ENCODE measurements at regions of chr12 and their contacts with region 1.

Region 1: DNA sequence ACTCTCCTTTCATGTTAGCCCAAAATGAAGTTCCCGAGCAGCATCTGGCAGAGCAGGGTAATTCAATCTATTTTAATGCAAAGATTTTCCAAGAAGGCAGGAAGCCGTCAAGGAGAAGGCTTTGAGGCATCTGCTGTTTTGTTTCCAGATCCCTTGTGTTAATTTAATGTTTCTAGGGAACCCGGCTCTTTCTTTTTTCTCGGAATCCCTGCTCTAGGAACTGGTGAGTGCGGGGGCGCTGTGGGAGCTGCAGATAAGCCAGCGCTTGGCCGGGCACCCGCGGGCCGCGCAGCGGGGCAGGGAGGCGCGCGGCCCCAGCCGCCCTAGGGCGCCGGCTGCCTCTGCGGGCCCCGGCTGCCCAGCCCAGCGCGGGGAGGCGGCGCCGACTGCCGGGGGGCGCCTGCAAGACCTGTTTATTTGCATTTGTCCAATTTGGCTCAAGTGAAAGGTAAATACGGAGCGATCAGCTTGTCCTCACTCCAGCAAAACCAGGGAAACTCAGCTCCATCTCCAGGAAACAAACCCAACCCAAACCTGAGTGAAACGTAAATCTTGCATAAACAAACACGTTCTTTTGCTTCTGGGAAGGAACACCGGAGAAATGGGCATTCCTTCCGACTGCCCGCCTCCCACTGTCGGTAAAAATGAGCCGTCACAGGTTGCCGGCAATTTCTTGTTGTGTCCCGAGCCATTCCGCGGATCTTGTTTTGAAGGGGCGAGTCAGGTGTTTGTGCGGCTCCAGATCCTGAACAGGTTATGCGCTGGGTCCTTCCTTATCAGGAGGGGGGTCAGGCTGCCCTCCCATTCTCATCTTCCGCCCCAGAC is 65.1 kb downstream of the CRADD start:
- DNase-seq: peak; percentile 32
- H3K4me3 Mint-ChIP-seq: peak overlapping the region; percentile 82
- H3K27ac Mint-ChIP-seq: peak overlapping the region; percentile 79
- H3K4me1 Mint-ChIP-seq: peaks cover 30% of the 10 kb centered on the region
- H3K27me3 Mint-ChIP-seq: peaks cover 1% of the 10 kb centered on the region

Region 2: GRCh38 chr12:93419388-93420034 is 322.8 kb before region 1 on chr12:
- intact Hi-C with region 1: no loop called
- DNase-seq: no peak
- H3K4me3 Mint-ChIP-seq: no peak overlapping the region
- H3K27ac Mint-ChIP-seq: no peak overlapping the region
- H3K4me1 Mint-ChIP-seq: peaks cover 69% of the 10 kb centered on the region
- H3K27me3 Mint-ChIP-seq: no peaks in the 10 kb centered on the region

Region 3: DNA sequence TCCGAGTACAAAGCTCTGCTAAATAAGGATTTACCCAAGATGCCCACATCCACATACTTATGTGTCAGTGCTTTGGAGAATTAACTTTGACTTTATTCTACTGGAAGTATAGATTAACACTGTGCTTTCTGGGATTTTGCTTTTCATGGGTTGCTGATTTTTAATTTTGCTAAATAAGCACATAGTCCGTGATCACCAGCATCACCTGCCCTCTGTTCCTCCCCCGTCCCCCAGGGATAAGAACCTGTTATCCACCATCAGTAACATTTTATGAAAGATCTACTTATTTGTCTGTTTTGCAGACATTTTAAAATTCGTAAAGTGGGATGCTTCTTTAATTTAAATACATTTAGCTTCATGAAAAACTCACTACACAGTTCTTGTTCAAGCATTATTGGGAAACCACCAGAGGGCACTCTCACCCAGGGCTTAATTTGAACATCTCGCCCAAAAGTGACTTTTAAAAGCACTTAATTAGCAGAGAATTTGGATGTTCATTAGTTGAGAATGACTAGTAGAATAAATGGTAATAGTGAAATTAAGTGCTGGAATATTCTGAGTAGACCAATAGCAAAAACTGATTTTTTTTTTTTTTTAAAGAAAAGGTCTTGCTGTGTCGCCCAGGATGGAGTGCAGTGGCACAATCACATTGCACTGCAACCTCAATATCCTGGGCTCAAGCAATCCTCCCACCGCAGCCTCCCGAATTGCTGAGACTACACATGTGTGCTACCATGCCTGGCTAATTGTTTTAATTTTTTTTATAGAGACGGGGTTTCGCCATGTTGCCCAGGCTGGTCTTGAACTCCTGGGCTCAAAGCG is 239.3 kb before region 1 on chr12:
- intact Hi-C with region 1: loop called (anchors 5 kb)
- DNase-seq: peak; percentile 26
- H3K4me3 Mint-ChIP-seq: no peak overlapping the region
- H3K27ac Mint-ChIP-seq: no peak overlapping the region
- H3K4me1 Mint-ChIP-seq: peaks cover 15% of the 10 kb centered on the region
- H3K27me3 Mint-ChIP-seq: no peaks in the 10 kb centered on the region

Measured in activated T-helper 2 cell treated with anti-CD3 and anti-CD28 coated beads, Interferon-gamma antibody, Interleukin-2, Interleukin-4, amounts not matched to agents 10 μg/mL and 5 μg/mL and 100 μg/mL, durations not matched to agents 14 hours and 24 hours and 36 hours (primary cell).